Dorsolateral prefrontal cortex (tissue), 120 donors: ENCODE measurements at regions of chr11 and their contacts with region 1.

Region 1: DNA sequence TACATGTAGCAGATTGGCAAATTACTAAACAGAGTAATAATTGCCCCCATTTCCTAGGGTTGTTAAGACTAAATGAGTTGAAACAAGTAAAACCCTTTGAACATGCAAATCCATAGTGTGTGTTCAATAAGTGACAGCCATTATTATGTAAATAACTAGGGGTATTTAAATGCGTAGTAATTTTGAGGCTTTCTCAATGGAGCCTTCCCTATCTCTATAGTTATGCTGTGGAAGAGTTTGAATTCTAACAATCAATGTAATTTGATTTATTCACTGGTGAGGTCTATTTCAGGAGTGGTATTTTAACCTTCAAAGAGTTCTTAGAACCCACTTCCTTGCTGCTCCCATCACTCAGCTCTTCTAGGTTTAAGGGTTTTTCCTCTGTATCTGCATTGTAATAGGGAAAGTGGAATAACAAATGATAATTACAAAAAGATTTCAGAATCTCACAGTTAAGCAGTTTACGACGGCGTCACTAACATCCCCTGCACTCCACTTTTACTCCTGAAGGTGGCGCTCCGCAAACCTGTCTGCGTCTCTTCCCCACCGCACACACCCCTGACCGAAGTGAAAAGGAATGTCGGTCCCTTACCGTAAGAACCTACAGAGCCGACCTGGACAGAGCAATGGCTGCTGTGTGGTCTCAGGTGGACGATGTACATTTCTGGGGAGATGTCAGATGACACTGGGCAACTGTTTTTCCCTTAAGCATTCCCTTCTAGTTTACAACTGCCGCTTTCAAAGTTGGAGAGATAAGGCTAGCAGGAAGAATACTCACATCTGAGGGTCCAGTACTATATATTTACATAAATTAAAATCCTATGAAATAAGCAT is 80.8 kb downstream of the ZC3H12C start:
- DNase-seq: peak in 8 of 10 donors; percentile 22 to 68 (median 59)
- H3K4me3 ChIP-seq: peak overlapping the region in 42 of 59 donors; percentile 1 to 53 (median 34)
- H3K27ac ChIP-seq: peak overlapping the region in 12 of 59 donors; percentile 10 to 64 (median 50)
- H3K27me3 ChIP-seq: no peaks in the 10 kb centered on the region
- CTCF ChIP-seq: peak; percentile 51 to 87 (median 74)

Region 2: DNA sequence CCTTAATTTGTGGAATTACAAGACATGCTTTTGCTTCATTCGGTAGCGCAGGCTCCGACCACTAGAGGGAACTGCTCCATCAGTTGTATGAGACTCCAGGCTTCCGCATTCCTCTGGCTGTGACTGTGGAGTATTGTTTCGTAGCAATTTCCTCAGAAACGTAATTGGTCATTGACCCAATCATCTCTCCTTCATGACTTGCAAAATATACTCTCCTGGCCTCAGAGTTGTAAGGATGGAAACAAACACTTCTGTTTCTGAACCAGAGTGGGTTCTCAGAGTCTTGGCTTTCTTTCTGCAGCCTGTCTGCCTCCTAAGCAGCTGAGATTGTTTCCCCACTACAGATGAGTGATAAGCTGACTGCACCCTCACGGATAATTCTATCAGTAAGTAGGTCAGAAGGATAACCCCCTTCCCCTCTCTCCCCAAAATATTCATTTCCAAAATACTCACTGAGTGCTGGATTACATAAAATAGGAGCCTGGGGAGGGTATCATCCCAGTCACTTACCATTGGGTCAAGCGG is 227.6 kb before region 1 on chr11:
- intact Hi-C with region 1: loop called (anchors 5 to 10 kb)
- DNase-seq: peak; percentile 55 to 95 (median 86)
- H3K4me3 ChIP-seq: peak overlapping the region in 58 of 59 donors; percentile 10 to 68 (median 48)
- H3K27ac ChIP-seq: peak overlapping the region in 56 of 59 donors; percentile 4 to 87 (median 64)
- H3K27me3 ChIP-seq: no peaks in the 10 kb centered on the region
- CTCF ChIP-seq: peak; percentile 44 to 97 (median 94)

Region 3: GRCh38 chr11:109954534-109954933 is 219.5 kb before region 1 on chr11:
- intact Hi-C with region 1: loop called (anchors 5 to 10 kb)
- DNase-seq: no peak
- H3K4me3 ChIP-seq: no peak overlapping the region
- H3K27ac ChIP-seq: no peak overlapping the region
- H3K27me3 ChIP-seq: peaks cover 0 to 3% (median 0%) of the 10 kb centered on the region in 45 donors
- CTCF ChIP-seq: no peak

Region 4: DNA sequence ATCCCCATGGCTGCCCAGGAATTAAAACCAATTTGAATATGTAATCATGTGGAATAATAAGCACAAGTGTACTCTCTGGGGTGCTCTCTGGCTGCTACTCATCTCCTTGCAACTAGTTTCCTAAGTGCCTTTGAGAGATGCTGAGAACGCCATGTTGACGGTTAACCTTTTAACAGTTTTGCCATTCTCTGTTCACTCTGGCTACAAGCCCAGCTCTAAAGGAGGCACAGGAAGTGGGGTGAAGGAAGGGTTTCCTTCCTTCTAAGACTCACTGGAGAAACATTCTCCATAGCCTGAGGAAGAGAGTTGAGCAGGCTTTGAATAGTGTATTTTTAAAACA is 202.9 kb before region 1 on chr11:
- intact Hi-C with region 1: no loop called
- DNase-seq: no peak
- H3K4me3 ChIP-seq: peak overlapping the region in 15 of 59 donors; percentile 2 to 35 (median 13)
- H3K27ac ChIP-seq: peak overlapping the region in 15 of 59 donors; percentile 2 to 56 (median 20)
- H3K27me3 ChIP-seq: no peaks in the 10 kb centered on the region
- CTCF ChIP-seq: no peak

Region 5: GRCh38 chr11:110128161-110128560 is 45.9 kb before region 1 on chr11:
- intact Hi-C with region 1: no loop called
- DNase-seq: no peak
- H3K4me3 ChIP-seq: peak overlapping the region in 1 of 59 donors; percentile 15
- H3K27ac ChIP-seq: peak overlapping the region in 40 of 59 donors; percentile 0 to 73 (median 48)
- H3K27me3 ChIP-seq: no peaks in the 10 kb centered on the region
- CTCF ChIP-seq: no peak